ENCODE measurements at regions of chr17 and their contacts with region 1.

Region 1: GRCh38 chr17:77429919-77430752 is 289.4 kb downstream of the SEC14L1 start:
- DNase-seq: peak; percentile 86 to 95
- H3K4me3 ChIP-seq: no peak overlapping the region
- H3K27ac ChIP-seq: 0 out of 2 replicates have a peak overlapping the region, but pooled peaks have one; percentile 12
- H3K4me1 ChIP-seq: peaks cover 0 to 56% (median 45%) of the 10 kb centered on the region in 4 experiments; a peak in 6 of 7 replicates
- H3K27me3 ChIP-seq: no peaks in the 10 kb centered on the region
- CTCF ChIP-seq: peak; percentile 61 to 88 (median 84)
- EP300 ChIP-seq: no peak
- POLR2A ChIP-seq: no peak
- RAD21 ChIP-seq: peak; percentile 79 to 85

Region 2: GRCh38 chr17:77331301-77331864 is 98.8 kb before region 1 on chr17:
- CTCF ChIA-PET with region 1: interaction called, 80 read pairs
- POLR2A ChIA-PET with region 1: no interaction called
- DNase-seq: peak; percentile 62 to 99
- H3K4me3 ChIP-seq: peak overlapping the region in 1 of 4 experiments; percentile 39; a peak in 2 of 8 replicates
- H3K27ac ChIP-seq: no peak overlapping the region
- H3K4me1 ChIP-seq: peaks cover 0 to 9% (median under 1%) of the 10 kb centered on the region in 4 experiments; a peak in 3 of 7 replicates
- H3K27me3 ChIP-seq: no peaks in the 10 kb centered on the region
- CTCF ChIP-seq: peak; percentile 90 to 94 (median 92)
- EP300 ChIP-seq: no peak
- POLR2A ChIP-seq: no peak
- RAD21 ChIP-seq: peak; percentile 97

Region 3: GRCh38 chr17:77374170-77374936 is 55.8 kb before region 1 on chr17:
- CTCF ChIA-PET with region 1: interaction called, 29 read pairs
- POLR2A ChIA-PET with region 1: interaction called, 10 read pairs
- DNase-seq: peak; percentile 59 to 82
- H3K4me3 ChIP-seq: peak overlapping the region; percentile 76 to 86 (median 82)
- H3K27ac ChIP-seq: peak overlapping the region; percentile 54
- H3K4me1 ChIP-seq: peaks cover 9 to 55% (median 45%) of the 10 kb centered on the region in 4 experiments
- H3K27me3 ChIP-seq: no peaks in the 10 kb centered on the region
- CTCF ChIP-seq: peak; percentile 41 to 53 (median 51)
- EP300 ChIP-seq: no peak
- POLR2A ChIP-seq: peak in 1 of 2 experiments; percentile 53; a peak in 2 of 3 replicates
- RAD21 ChIP-seq: peak; percentile 35 to 50

Region 4: GRCh38 chr17:77444984-77445759 is 15.0 kb after region 1 on chr17:
- CTCF ChIA-PET with region 1: interaction called, 51 read pairs
- POLR2A ChIA-PET with region 1: interaction called, 23 read pairs
- DNase-seq: no peak
- H3K4me3 ChIP-seq: no peak overlapping the region
- H3K27ac ChIP-seq: no peak overlapping the region
- H3K4me1 ChIP-seq: peaks cover 8 to 12% (median 9%) of the 10 kb centered on the region in 4 experiments
- H3K27me3 ChIP-seq: no peaks in the 10 kb centered on the region
- CTCF ChIP-seq: no peak
- EP300 ChIP-seq: no peak
- POLR2A ChIP-seq: no peak
- RAD21 ChIP-seq: no peak

Region 5: GRCh38 chr17:77456951-77457548 is 26.9 kb after region 1 on chr17:
- CTCF ChIA-PET with region 1: interaction called, 51 read pairs
- POLR2A ChIA-PET with region 1: interaction called, 23 read pairs
- DNase-seq: no peak
- H3K4me3 ChIP-seq: no peak overlapping the region
- H3K27ac ChIP-seq: no peak overlapping the region
- H3K4me1 ChIP-seq: peaks cover 18 to 33% (median 24%) of the 10 kb centered on the region in 4 experiments; a peak in 6 of 7 replicates
- H3K27me3 ChIP-seq: no peaks in the 10 kb centered on the region
- CTCF ChIP-seq: peak in 1 of 3 experiments; percentile 4; a peak in 1 of 4 replicates
- EP300 ChIP-seq: no peak
- POLR2A ChIP-seq: no peak
- RAD21 ChIP-seq: no peak

Region 6: DNA sequence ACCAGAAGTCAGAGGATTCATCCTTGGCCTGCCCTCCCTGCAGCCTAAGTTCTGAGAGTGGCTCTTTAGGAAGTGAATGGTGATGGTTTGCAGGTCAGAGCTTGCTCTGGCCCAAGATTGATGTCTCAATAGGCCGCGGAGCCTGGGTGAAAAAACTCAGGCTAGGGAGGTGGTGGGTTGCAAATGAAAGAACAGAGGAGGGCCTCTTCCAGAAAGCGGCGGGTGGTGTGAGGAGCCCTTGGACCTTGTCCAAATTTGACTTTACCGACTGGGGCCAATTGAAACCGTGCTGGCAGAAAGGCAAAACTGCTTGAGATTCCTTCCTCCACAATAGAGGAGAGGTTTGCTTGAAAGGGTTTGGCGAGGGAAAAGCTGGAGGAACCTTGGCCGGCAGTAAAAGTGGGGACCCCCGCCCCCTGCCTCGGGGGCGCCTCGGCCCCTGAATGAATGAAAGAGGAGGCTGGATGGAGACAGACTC is 41.9 kb after region 1 on chr17:
- CTCF ChIA-PET with region 1: interaction called, 29 read pairs
- POLR2A ChIA-PET with region 1: interaction called, 4 read pairs
- DNase-seq: no peak
- H3K4me3 ChIP-seq: peak overlapping the region in 1 of 4 experiments; percentile 17; a peak in 2 of 8 replicates
- H3K27ac ChIP-seq: peak overlapping the region; percentile 76
- H3K4me1 ChIP-seq: peaks cover 29 to 66% (median 45%) of the 10 kb centered on the region in 4 experiments
- H3K27me3 ChIP-seq: no peaks in the 10 kb centered on the region
- CTCF ChIP-seq: no peak
- EP300 ChIP-seq: no peak
- POLR2A ChIP-seq: no peak
- RAD21 ChIP-seq: no peak

Region 7: GRCh38 chr17:77494664-77495435 is 64.7 kb after region 1 on chr17:
- CTCF ChIA-PET with region 1: interaction called, 95 read pairs
- POLR2A ChIA-PET with region 1: interaction called, 3 read pairs
- DNase-seq: peak; percentile 61 to 91
- H3K4me3 ChIP-seq: no peak overlapping the region
- H3K27ac ChIP-seq: no peak overlapping the region
- H3K4me1 ChIP-seq: peaks cover 0 to 5% (median 1%) of the 10 kb centered on the region in 4 experiments; a peak in 4 of 7 replicates
- H3K27me3 ChIP-seq: no peaks in the 10 kb centered on the region
- CTCF ChIP-seq: peak; percentile 93 to 94 (median 94)
- EP300 ChIP-seq: no peak
- POLR2A ChIP-seq: 0 out of 3 replicates have a peak, but pooled peaks of 1 of the 2 experiments have one; percentile 20
- RAD21 ChIP-seq: peak; percentile 98 to 99

Measured in H1 (cell line).